ENCODE measurements at regions of chr20 and their contacts with region 1.

Region 1: GRCh38 chr20:35447082-35447789 is 8.2 kb upstream of the CEP250 start:
- DNase-seq: no peak
- H3K4me3 ChIP-seq: peak overlapping the region; percentile 23; the same call in 1 of the 2 replicates
- CTCF ChIP-seq: peak; percentile 91

Region 2: GRCh38 chr20:35166242-35166830 is 280.9 kb before region 1 on chr20:
- CTCF ChIA-PET with region 1: no interaction called
- POLR2A ChIA-PET with region 1: no interaction called
- DNase-seq: no peak
- H3K4me3 ChIP-seq: no peak overlapping the region
- CTCF ChIP-seq: no peak

Region 3: DNA sequence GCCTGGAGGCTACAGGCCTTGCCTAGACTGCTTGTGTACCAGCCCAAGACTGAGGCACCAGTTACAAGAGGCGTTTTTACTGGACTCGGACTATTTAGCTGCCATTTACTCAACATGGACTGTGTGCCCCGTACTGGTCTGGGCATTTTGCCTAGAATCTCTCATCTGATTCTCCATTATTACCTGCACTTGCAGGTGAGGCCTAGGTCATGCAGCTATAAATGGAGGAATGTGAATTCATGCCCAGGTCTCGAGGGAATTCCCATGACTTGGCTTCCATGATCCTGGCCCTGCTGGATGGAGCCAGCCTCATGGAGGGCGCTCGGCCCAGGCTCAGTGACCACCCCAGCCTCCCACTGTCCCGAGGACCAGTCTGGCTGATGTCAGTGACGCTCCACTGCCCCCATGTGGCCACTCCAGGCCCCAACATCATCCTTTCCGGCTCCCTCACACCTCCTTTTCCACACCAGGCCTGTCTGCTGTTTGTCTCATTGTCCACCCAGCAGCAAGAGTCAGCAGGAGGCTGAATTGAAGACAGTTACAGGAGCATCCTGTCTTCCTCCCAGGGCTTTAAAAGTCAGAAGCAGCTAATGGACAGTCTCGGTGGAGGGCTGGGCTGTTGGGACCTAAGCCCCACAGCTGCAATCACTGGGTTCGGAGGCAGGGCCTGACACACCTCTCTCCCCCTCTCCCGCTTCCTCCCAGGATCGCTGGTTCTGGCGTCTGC is 178.0 kb before region 1 on chr20:
- CTCF ChIA-PET with region 1: interaction called, 53 read pairs
- POLR2A ChIA-PET with region 1: no interaction called
- DNase-seq: no peak
- H3K4me3 ChIP-seq: no peak overlapping the region
- CTCF ChIP-seq: peak; percentile 95

Region 4: GRCh38 chr20:35277531-35278395 is 169.5 kb before region 1 on chr20 and contains the start of gene MMP24OS:
- CTCF ChIA-PET with region 1: interaction called, 53 read pairs
- POLR2A ChIA-PET with region 1: no interaction called
- DNase-seq: no peak
- H3K4me3 ChIP-seq: peak within 1 kb of the TSS; percentile 83
- CTCF ChIP-seq: peak; percentile 48

Region 5: GRCh38 chr20:35284267-35284991 is 162.8 kb before region 1 on chr20 and contains the start of gene EIF6:
- CTCF ChIA-PET with region 1: interaction called, 12 read pairs
- POLR2A ChIA-PET with region 1: no interaction called
- DNase-seq: no peak
- H3K4me3 ChIP-seq: peak within 1 kb of the TSS; percentile 92
- CTCF ChIP-seq: no peak

Region 6: GRCh38 chr20:35432430-35432735 is 14.9 kb before region 1 on chr20:
- CTCF ChIA-PET with region 1: interaction called, 73 read pairs
- POLR2A ChIA-PET with region 1: no interaction called
- DNase-seq: no peak
- H3K4me3 ChIP-seq: no peak overlapping the region
- CTCF ChIP-seq: no peak

Region 7: GRCh38 chr20:35788796-35789195 is 341.6 kb after region 1 on chr20:
- CTCF ChIA-PET with region 1: no interaction called
- POLR2A ChIA-PET with region 1: no interaction called
- DNase-seq: no peak
- H3K4me3 ChIP-seq: no peak overlapping the region
- CTCF ChIP-seq: no peak